ENCODE measurements at regions of chr2 and their contacts with region 1.

Region 1: DNA sequence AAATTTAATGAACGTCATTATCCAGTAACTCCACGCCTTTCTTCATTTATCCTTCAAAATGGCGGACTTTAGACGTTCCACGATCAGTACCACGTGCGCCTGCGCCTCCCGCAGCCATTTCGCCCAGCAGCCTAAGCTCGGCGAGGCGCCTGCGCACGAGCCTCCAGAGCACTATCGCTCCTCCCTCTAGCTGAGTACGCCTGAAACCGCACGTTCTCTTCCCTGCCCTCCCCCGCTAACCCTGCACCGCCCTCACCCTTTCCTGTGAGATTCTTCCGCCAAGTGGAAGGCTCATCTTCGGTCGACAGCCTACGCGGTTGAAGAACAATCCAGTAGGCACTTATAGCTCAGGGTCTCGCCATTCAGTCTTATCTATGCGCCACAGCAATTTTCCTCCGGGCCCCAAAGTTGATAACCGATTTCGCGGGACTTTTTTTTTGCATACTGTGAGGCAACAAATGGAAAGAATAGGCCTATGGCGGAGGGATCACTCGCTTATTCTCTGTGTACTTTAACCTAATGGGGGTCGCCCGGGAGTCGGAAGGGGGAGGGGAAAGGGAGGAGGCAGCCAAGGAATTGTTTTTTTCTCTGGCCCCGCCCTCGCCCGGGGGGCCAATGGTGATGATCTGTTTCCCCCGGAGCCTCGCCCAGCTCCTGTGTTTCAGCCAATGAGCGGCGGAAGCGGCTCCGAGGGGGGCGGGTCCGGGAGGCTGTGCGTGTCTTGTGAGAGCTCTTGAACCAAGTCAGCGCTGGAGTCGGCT is at the start of gene KDM3A:
- DNase-seq: peak; percentile 98 to 100 (median 99)
- ATAC-seq: peak; percentile 76
- H3K4me3 ChIP-seq: peak within 1 kb of the TSS; percentile 87
- H3K4me3 Mint-ChIP-seq: peak within 1 kb of the TSS; percentile 99
- H3K27ac ChIP-seq: peak within 1 kb of the TSS; percentile 76 to 94
- H3K27ac Mint-ChIP-seq: peak within 1 kb of the TSS; percentile 97
- H3K4me1 ChIP-seq: peaks cover 33% of the 10 kb centered on the region
- H3K4me1 Mint-ChIP-seq: peaks cover 49% of the 10 kb centered on the region
- H3K27me3 ChIP-seq: no peaks in the 10 kb centered on the region
- H3K27me3 Mint-ChIP-seq: peaks cover 7% of the 10 kb centered on the region
- CTCF ChIP-seq: no peak
- total RNA-seq, gene KDM3A: 205 to 207 TPM

Region 2: GRCh38 chr2:85327822-85328617 is 1112.8 kb before region 1 on chr2 and contains the start of gene TGOLN2:
- CTCF ChIA-PET with region 1: no interaction called
- POLR2A ChIA-PET with region 1: interaction called, 21 read pairs
- intact Hi-C with region 1: no loop called
- DNase-seq: peak; percentile 88 to 96 (median 94)
- ATAC-seq: peak; percentile 84
- H3K4me3 ChIP-seq: peak within 1 kb of the TSS; percentile 89
- H3K4me3 Mint-ChIP-seq: peak within 1 kb of the TSS; percentile 96
- H3K27ac ChIP-seq: peak within 1 kb of the TSS; percentile 95 to 97
- H3K27ac Mint-ChIP-seq: peak within 1 kb of the TSS; percentile 97
- H3K4me1 ChIP-seq: peaks cover 35% of the 10 kb centered on the region
- H3K4me1 Mint-ChIP-seq: peaks cover 54% of the 10 kb centered on the region
- H3K27me3 ChIP-seq: no peaks in the 10 kb centered on the region
- H3K27me3 Mint-ChIP-seq: no peaks in the 10 kb centered on the region
- CTCF ChIP-seq: no peak
- total RNA-seq, gene TGOLN2: 172 to 175 TPM

Region 3: DNA sequence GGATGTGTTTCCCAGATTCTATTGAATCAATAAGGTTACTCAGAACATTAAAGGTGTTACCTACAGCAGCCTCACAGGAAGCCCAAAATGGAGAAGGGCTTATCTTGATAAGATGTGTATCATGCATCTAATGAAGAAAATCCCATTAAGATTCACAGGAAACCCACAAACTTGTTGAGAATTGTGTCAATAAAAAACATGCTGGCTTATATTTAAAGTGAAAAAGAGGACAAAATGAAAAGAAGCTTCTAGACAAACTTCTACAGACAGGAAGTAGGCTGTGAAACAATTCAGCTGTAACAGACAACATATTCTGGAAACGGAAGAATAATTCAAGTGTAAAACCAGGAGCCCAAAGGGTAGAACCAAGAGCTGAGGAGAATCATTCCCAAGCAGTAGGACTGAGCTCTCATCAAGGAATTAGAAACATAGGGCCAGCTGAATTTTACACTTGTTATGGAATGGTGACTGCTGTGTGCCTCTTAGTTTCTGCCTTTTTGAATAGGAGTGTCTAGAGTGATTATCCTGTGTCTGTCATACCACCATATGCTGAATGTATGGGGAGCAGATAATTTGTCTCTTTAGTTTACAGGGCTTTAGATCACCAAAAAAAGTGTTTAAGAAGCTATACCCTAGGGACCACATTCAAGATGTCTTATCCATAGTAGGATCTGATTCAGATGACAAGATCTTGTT is 255.1 kb before region 1 on chr2:
- CTCF ChIA-PET with region 1: no interaction called
- POLR2A ChIA-PET with region 1: interaction called, 34 read pairs
- intact Hi-C with region 1: no loop called
- DNase-seq: peak in 4 of 14 experiments; percentile 23 to 75 (median 68)
- ATAC-seq: peak; percentile 73
- H3K4me3 ChIP-seq: peak overlapping the region; percentile 15
- H3K4me3 Mint-ChIP-seq: peak overlapping the region; percentile 75
- H3K27ac ChIP-seq: peak overlapping the region; percentile 42 to 65
- H3K27ac Mint-ChIP-seq: peak overlapping the region; percentile 95
- H3K4me1 ChIP-seq: peaks cover 60% of the 10 kb centered on the region
- H3K4me1 Mint-ChIP-seq: peaks cover 73% of the 10 kb centered on the region
- H3K27me3 ChIP-seq: no peaks in the 10 kb centered on the region
- H3K27me3 Mint-ChIP-seq: no peaks in the 10 kb centered on the region
- CTCF ChIP-seq: no peak

Region 4: GRCh38 chr2:86221066-86221684 is 219.6 kb before region 1 on chr2:
- CTCF ChIA-PET with region 1: no interaction called
- POLR2A ChIA-PET with region 1: interaction called, 29 read pairs
- intact Hi-C with region 1: loop called (anchors 2 to 10 kb)
- DNase-seq: peak in 13 of 14 experiments; percentile 17 to 77 (median 47)
- ATAC-seq: peak; percentile 69
- H3K4me3 ChIP-seq: no peak overlapping the region
- H3K4me3 Mint-ChIP-seq: no peak overlapping the region
- H3K27ac ChIP-seq: no peak overlapping the region
- H3K27ac Mint-ChIP-seq: no peak overlapping the region
- H3K4me1 ChIP-seq: peaks cover 18% of the 10 kb centered on the region
- H3K4me1 Mint-ChIP-seq: peaks cover 28% of the 10 kb centered on the region
- H3K27me3 ChIP-seq: no peaks in the 10 kb centered on the region
- H3K27me3 Mint-ChIP-seq: no peaks in the 10 kb centered on the region
- CTCF ChIP-seq: peak; percentile 79

Region 5: GRCh38 chr2:86368161-86368824 is 72.5 kb before region 1 on chr2:
- CTCF ChIA-PET with region 1: interaction called, 3 read pairs
- POLR2A ChIA-PET with region 1: interaction called, 50 read pairs
- intact Hi-C with region 1: loop called (anchors 2 to 5 kb)
- DNase-seq: peak in 13 of 14 experiments; percentile 8 to 76 (median 28)
- ATAC-seq: peak; percentile 74
- H3K4me3 ChIP-seq: peak overlapping the region; percentile 9
- H3K4me3 Mint-ChIP-seq: peak overlapping the region; percentile 38
- H3K27ac ChIP-seq: no peak overlapping the region
- H3K27ac Mint-ChIP-seq: peak overlapping the region; percentile 22
- H3K4me1 ChIP-seq: peaks cover 32% of the 10 kb centered on the region
- H3K4me1 Mint-ChIP-seq: peaks cover 64% of the 10 kb centered on the region
- H3K27me3 ChIP-seq: no peaks in the 10 kb centered on the region
- H3K27me3 Mint-ChIP-seq: no peaks in the 10 kb centered on the region
- CTCF ChIP-seq: peak; percentile 70

Region 6: GRCh38 chr2:86453836-86454235 is 13.0 kb after region 1 on chr2:
- CTCF ChIA-PET with region 1: interaction called, 4 read pairs
- POLR2A ChIA-PET with region 1: interaction called, 47 read pairs
- intact Hi-C with region 1: no loop called
- DNase-seq: no peak
- ATAC-seq: no peak
- H3K4me3 ChIP-seq: no peak overlapping the region
- H3K4me3 Mint-ChIP-seq: no peak overlapping the region
- H3K27ac ChIP-seq: no peak overlapping the region
- H3K27ac Mint-ChIP-seq: no peak overlapping the region
- H3K4me1 ChIP-seq: no peaks in the 10 kb centered on the region
- H3K4me1 Mint-ChIP-seq: peaks cover 50% of the 10 kb centered on the region
- H3K27me3 ChIP-seq: no peaks in the 10 kb centered on the region
- H3K27me3 Mint-ChIP-seq: no peaks in the 10 kb centered on the region
- CTCF ChIP-seq: no peak

Region 7: DNA sequence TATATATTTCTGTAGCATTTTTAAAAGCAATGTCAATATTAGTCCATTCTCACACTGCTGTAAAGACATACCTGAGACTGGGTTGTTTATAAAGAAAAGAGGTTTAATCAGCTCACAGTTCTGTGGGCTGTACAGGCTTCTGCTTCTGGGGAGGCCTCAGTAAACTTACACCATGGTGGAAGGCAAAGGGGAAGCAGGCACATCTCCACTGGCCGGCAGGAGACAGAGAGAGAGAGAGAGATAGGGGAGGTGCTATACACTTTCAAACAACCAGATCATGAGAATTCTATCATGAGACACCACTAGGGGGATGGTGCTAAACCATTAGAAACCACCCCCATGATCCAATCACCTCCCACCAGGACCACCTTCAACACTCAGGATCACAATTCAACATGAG is 79.3 kb after region 1 on chr2:
- CTCF ChIA-PET with region 1: no interaction called
- POLR2A ChIA-PET with region 1: no interaction called
- intact Hi-C with region 1: no loop called
- DNase-seq: no peak
- ATAC-seq: no peak
- H3K4me3 ChIP-seq: no peak overlapping the region
- H3K4me3 Mint-ChIP-seq: no peak overlapping the region
- H3K27ac ChIP-seq: no peak overlapping the region
- H3K27ac Mint-ChIP-seq: no peak overlapping the region
- H3K4me1 ChIP-seq: no peaks in the 10 kb centered on the region
- H3K4me1 Mint-ChIP-seq: peaks cover 5% of the 10 kb centered on the region
- H3K27me3 ChIP-seq: no peaks in the 10 kb centered on the region
- H3K27me3 Mint-ChIP-seq: no peaks in the 10 kb centered on the region
- CTCF ChIP-seq: no peak

Region 8: GRCh38 chr2:86562922-86563649 is 122.3 kb after region 1 on chr2 and contains the start of gene CHMP3:
- CTCF ChIA-PET with region 1: no interaction called
- POLR2A ChIA-PET with region 1: interaction called, 42 read pairs
- intact Hi-C with region 1: loop called (anchors 5 kb)
- DNase-seq: peak; percentile 91 to 99 (median 95)
- ATAC-seq: peak; percentile 90
- H3K4me3 ChIP-seq: peak within 1 kb of the TSS; percentile 99
- H3K4me3 Mint-ChIP-seq: peak within 1 kb of the TSS; percentile 98
- H3K27ac ChIP-seq: peak within 1 kb of the TSS; percentile 99 to 100
- H3K27ac Mint-ChIP-seq: peak within 1 kb of the TSS; percentile 98
- H3K4me1 ChIP-seq: peaks cover 28% of the 10 kb centered on the region
- H3K4me1 Mint-ChIP-seq: peaks cover 39% of the 10 kb centered on the region
- H3K27me3 ChIP-seq: no peaks in the 10 kb centered on the region
- H3K27me3 Mint-ChIP-seq: peaks cover 3% of the 10 kb centered on the region
- CTCF ChIP-seq: no peak
- total RNA-seq, gene CHMP3: 61.7 to 65.3 TPM